Esophagus muscularis mucosa (tissue), 4 donors: ENCODE measurements at regions of chr17 and their contacts with region 1.

Region 1: DNA sequence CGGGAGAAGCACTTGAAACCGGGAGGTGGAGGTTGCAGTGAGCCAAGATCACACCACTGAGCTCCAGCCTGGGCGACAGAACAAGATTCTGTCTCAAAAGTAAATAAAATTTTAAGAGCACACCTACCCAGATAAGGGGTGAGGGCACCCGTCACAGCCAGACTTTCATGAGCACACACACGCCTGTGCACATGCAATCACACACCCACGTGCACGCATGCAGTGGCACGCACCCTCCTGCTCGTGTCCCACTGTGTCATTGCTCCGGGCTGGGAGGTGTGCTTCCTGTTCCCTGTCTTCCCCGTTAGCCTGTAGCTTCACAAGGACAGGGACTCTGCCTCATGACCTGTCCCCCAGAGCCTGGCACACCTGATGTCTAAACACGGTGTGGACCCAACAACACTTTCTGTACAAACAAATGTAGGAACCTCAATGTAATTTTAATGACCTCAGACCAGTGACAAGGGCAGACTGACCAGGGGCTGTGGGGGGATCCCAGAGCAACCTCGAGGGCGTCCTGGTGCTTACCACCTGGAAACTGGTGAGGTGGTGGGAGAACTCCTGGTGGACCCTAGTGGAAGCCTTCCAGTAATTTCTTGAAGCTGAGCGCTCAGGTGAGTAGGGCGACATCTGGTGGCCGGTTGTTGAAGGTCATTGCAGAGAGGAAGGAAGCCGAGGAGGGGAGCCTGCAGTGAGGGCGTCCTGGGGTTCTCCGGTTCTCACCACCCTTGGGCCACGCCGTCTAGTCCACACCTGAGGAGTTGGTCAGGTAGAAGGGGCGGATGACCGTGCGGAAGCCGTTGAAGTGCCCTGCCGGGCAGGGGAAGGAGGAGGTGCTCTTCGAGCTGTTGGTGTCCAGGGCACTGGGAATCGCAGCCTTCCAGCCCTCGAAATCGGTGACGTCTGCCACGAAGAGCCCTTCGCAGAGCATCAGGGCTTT is 8.6 kb downstream of the LGALS3BP start:
- DNase-seq: peak; percentile 96
- H3K4me3 ChIP-seq: no peak overlapping the region
- H3K27ac ChIP-seq: peak overlapping the region in 3 of 4 donors; percentile 34 to 46 (median 44)
- H3K4me1 ChIP-seq: peaks cover 32 to 44% (median 42%) of the 10 kb centered on the region in 4 donors
- H3K27me3 ChIP-seq: no peaks in the 10 kb centered on the region
- CTCF ChIP-seq: peak; percentile 82 to 92 (median 92)
- EP300 ChIP-seq: no peak
- POLR2A ChIP-seq: no peak

Region 2: GRCh38 chr17:78865682-78866390 is 105.3 kb before region 1 on chr17:
- intact Hi-C with region 1: loop called (anchors 1 kb)
- DNase-seq: peak; percentile 96
- H3K4me3 ChIP-seq: peak overlapping the region in 3 of 4 donors; percentile 20 to 34 (median 21)
- H3K27ac ChIP-seq: peak overlapping the region; percentile 38 to 61 (median 59)
- H3K4me1 ChIP-seq: peaks cover 16 to 56% (median 50%) of the 10 kb centered on the region in 4 donors
- H3K27me3 ChIP-seq: no peaks in the 10 kb centered on the region
- CTCF ChIP-seq: peak; percentile 86 to 97 (median 94)
- EP300 ChIP-seq: no peak
- POLR2A ChIP-seq: no peak

Region 3: DNA sequence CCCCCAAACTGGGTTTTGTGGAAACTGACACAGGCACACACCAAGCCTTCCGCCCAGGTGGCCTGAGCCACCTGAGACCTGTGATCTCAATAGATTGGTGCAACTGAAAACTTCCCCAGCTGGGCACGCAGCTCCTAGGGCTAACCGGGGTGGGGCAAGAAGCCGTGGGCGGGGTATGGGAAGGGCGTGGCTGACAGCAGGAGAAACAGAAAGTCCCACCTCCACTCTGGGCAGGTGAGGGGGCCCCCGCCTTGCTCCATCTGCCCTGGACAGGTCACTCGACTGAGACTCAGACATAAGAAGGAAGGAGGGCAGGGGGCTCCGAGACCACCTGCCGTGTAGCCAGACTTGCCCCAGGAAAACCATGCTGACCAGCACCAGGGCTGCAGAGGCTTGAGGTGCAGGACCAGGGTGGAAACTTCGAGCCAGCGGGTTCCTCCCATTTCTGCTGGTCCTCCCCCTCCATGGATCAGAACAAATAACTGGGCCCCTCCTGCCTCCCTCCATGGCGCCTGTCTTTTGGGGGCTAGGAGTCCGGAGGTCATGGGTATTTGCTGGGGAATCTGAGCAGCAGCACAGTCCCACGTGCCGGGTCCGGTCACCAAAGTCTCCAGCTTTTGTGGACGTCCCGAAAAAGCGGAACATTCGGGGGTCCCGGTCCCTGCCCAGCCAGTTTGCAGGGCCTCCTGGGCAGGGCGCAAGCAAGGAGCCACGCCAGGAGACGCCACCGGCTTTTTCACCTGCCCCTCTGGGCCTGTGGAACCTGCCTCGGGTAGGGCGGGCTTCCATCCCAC is 47.2 kb before region 1 on chr17:
- intact Hi-C with region 1: loop called (anchors 5 kb)
- DNase-seq: no peak
- H3K4me3 ChIP-seq: peak overlapping the region; percentile 81 to 95 (median 91)
- H3K27ac ChIP-seq: peak overlapping the region; percentile 92 to 99 (median 96)
- H3K4me1 ChIP-seq: peaks cover 48 to 83% (median 74%) of the 10 kb centered on the region in 4 donors
- H3K27me3 ChIP-seq: no peaks in the 10 kb centered on the region
- CTCF ChIP-seq: no peak
- EP300 ChIP-seq: no peak
- POLR2A ChIP-seq: no peak

Region 4: GRCh38 chr17:79045842-79046196 is 74.7 kb after region 1 on chr17:
- intact Hi-C with region 1: no loop called
- DNase-seq: no peak
- H3K4me3 ChIP-seq: no peak overlapping the region
- H3K27ac ChIP-seq: peak overlapping the region in 2 of 4 donors; percentile 45 to 61
- H3K4me1 ChIP-seq: peaks cover 24 to 42% (median 29%) of the 10 kb centered on the region in 4 donors
- H3K27me3 ChIP-seq: no peaks in the 10 kb centered on the region
- CTCF ChIP-seq: peak; percentile 86 to 99 (median 91)
- EP300 ChIP-seq: no peak
- POLR2A ChIP-seq: no peak

Region 5: GRCh38 chr17:79104898-79105600 is 133.9 kb after region 1 on chr17:
- intact Hi-C with region 1: no loop called
- DNase-seq: no peak
- H3K4me3 ChIP-seq: no peak overlapping the region
- H3K27ac ChIP-seq: no peak overlapping the region
- H3K4me1 ChIP-seq: no peaks in the 10 kb centered on the region
- H3K27me3 ChIP-seq: peaks cover 0 to 65% (median 6%) of the 10 kb centered on the region in 4 donors
- CTCF ChIP-seq: no peak
- EP300 ChIP-seq: no peak
- POLR2A ChIP-seq: no peak